ENCODE measurements at regions of chr11 and their contacts with region 1.

Region 1: DNA sequence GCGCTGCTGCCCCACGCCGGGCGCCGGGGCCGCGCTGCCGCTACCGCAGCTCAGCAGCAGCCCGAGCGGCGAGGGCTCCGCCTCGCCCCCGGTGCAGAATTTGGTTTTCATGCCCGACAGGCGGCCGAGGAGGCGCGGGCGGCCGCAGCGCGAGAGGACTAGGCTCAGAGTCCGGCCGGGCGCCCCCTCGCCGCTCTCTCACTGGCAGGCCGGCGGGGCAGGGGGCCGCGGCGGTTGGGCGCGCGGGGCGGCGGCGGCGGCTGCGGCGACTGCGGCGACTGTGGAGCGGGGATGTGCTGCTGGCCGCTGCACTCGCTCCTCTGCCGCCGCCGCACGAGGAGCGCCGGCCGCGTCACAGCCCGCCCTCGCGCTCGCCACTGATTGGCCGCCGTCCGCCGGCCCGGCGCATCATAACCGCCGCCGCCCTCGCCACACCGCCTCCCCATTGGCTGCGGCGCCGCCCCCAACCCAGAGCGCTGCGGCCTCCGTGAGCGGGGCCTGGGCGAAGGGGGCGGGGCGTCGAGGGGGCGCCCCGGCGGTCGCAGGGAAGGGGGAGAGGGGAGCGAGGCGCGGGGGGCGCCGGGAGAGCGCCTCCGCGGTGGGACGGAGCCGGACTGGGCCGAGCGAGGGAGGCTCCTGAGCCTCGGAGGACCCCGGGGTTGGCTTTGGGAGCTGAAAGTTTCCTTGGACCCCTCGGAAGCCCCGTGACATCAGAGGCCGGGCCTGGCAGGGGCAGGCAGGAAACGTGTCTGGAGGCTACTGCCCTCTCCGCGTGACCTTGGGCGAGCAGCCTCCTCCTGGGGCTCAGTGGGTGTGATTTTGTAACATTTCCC is at the start of gene CHKA:
- DNase-seq: peak; percentile 96
- ATAC-seq: peak; percentile 83
- H3K4me3 ChIP-seq: peak within 1 kb of the TSS; percentile 92
- H3K27ac ChIP-seq: peak within 1 kb of the TSS; percentile 87
- H3K4me1 ChIP-seq: peaks cover 42% of the 10 kb centered on the region
- H3K27me3 ChIP-seq: no peaks in the 10 kb centered on the region
- CTCF ChIP-seq: no peak
- total RNA-seq, gene CHKA: 57.5 and 71.9 TPM in 2 replicates

Region 2: GRCh38 chr11:68038718-68039525 is 82.4 kb before region 1 on chr11 and contains the start of gene TCIRG1:
- CTCF ChIA-PET with region 1: no interaction called
- POLR2A ChIA-PET with region 1: no interaction called
- intact Hi-C with region 1: loop called (anchors 5 kb)
- DNase-seq: peak; percentile 89
- ATAC-seq: peak; percentile 79
- H3K4me3 ChIP-seq: peak within 1 kb of the TSS; percentile 78
- H3K27ac ChIP-seq: peak within 1 kb of the TSS; percentile 56
- H3K4me1 ChIP-seq: peaks cover 26% of the 10 kb centered on the region
- H3K27me3 ChIP-seq: no peaks in the 10 kb centered on the region
- CTCF ChIP-seq: no peak
- total RNA-seq, gene TCIRG1: 183 and 203 TPM in 2 replicates

Region 3: DNA sequence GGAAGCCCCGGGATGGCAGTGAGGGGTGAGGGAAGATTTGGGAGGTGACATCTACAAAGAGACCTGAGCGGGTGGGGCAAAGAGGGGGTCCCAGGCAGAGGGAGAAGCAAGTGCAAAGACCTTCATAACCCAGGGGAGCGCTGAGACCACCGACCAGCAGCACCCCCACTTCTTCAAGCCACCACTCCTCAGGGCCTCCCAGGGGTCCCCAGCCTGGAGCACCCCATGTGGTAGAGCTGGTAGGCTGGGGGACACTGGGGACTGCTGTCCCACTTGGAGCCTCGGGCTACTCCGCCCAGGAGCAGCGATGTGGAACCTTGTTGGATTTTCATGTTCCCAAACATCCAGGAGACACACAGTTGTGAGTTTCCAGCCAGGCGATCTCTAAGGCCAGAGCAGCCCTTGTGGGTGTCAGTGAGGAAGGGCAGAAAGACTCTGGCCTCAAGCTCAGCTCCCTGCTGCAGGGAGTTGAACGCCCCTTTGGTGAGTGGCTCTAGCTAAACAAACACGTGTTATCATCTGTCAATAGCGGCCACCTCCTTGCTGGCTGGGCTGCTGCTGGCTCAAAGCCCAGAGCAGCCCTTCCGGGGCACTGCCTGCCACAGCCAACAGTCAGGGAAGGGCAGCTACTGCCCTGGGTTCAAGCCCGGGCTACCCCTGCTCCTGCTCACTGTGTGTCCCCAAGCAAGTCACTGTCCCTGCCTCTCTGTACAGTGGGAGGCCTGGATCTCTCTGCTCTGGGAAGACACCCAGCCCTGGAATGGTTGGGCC is 25.6 kb after region 1 on chr11:
- CTCF ChIA-PET with region 1: no interaction called
- POLR2A ChIA-PET with region 1: no interaction called
- intact Hi-C with region 1: loop called (anchors 2 kb)
- DNase-seq: peak; percentile 93
- ATAC-seq: peak; percentile 79
- H3K4me3 ChIP-seq: no peak overlapping the region
- H3K27ac ChIP-seq: peak overlapping the region; percentile 50
- H3K4me1 ChIP-seq: peaks cover 35% of the 10 kb centered on the region
- H3K27me3 ChIP-seq: no peaks in the 10 kb centered on the region
- CTCF ChIP-seq: no peak

Measured in PC-3 (cell line).